Heart right ventricle (tissue), 16 donors: ENCODE measurements at regions of chr15 and their contacts with region 1.

Region 1: DNA sequence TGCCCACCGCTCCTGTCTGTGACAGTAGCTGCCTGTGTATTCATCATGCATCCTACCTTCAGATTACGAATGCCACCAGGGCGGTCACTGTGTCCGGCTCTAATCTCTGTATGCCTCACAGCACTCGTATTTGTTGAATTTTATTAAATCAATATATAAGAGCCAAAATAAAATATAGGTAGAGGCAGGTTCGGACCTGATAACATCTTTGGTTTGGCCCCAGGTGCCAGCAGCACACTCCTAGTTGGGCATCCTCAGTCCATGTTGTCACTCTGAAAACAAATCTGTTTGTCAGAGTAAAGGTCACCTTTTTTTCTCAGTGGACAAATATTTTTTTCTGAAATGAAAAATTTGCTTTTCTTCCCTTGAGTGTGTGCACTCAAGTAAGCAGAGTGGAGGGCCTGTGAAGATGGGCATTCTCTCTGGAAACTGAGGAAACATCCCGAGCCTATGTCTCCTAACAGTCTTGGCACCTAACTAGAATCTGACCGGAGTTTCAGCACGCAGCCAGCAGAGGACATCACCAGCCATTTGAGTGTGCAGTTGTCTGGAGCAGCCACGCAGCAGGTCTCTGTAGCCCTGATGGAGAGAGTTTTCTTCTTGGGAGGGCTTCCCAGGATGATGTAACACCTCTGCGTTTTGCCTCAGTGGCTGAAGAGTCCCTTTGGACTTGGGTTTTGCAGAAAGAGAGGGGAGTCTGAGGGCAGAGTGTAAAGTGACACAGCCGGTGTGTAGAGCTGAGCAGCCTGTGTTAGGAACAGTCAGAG is 51.3 kb downstream of the ABHD2 start:
- DNase-seq: no peak
- ATAC-seq: peak in 6 of 8 donors; percentile 13 to 36 (median 30)
- H3K4me3 ChIP-seq: no peak overlapping the region
- H3K27ac ChIP-seq: peak overlapping the region; percentile 15 to 88 (median 76)
- H3K4me1 ChIP-seq: peaks cover 30 to 100% (median 94%) of the 10 kb centered on the region in 9 donors
- H3K27me3 ChIP-seq: no peaks in the 10 kb centered on the region
- CTCF ChIP-seq: peak in 5 of 9 donors; percentile 15 to 42 (median 38)

Region 2: DNA sequence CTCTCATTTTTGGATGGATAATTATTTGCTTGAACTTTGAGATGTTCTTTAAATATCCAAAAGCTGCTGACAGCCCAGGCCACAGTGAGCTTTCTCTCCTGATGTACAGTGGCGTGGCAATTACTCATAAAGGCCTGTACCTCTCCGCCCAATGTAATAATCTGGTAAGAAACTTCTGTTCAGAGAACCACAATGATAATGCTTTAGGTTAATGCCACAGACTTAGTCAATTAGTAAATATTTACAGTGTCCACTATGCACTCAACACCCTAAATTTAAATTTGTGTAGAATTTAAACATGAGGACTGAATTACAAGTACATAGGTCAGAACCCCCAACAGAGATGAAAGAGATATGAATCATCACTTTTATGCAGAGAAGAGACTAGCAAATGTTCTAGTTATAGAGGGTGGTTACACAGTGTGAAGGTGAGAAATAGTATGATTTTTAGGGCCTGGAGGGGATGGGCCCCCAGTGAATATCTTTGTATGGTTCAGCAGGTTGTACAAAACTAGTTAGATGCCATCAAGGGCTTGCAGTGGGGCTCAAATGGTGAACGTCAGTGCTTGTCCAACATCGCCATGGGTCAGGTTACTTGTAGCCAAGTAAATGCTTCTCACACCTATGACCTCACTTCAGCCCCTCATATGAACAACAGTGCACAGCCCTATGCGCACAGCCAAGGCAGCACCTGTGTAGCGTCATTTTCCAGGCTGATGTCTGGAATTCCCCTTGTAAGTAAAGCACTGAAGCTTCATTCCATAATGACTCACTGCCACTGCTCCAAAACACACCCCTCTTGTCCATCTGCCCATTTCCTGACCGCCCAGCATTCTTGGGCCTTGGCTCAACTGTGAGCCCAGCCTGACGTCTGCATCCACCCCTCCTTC is 38.0 kb before region 1 on chr15:
- intact Hi-C with region 1: loop called in 1 of 10 experiments (anchors 5 kb)
- DNase-seq: peak; percentile 54 to 82
- ATAC-seq: peak; percentile 76 to 90 (median 84)
- H3K4me3 ChIP-seq: no peak overlapping the region
- H3K27ac ChIP-seq: peak overlapping the region in 9 of 10 donors; percentile 74 to 98 (median 84)
- H3K4me1 ChIP-seq: peaks cover 20 to 98% (median 89%) of the 10 kb centered on the region in 9 donors
- H3K27me3 ChIP-seq: no peaks in the 10 kb centered on the region
- CTCF ChIP-seq: no peak

Region 3: GRCh38 chr15:89171136-89172072 is 31.8 kb after region 1 on chr15:
- intact Hi-C with region 1: loop called in 3 of 10 experiments (anchors 5 kb)
- DNase-seq: peak in 1 of 2 donors; percentile 36
- ATAC-seq: peak in 2 of 8 donors; percentile 7 to 16
- H3K4me3 ChIP-seq: no peak overlapping the region
- H3K27ac ChIP-seq: no peak overlapping the region
- H3K4me1 ChIP-seq: peaks cover 0 to 61% (median 31%) of the 10 kb centered on the region in 9 donors
- H3K27me3 ChIP-seq: no peaks in the 10 kb centered on the region
- CTCF ChIP-seq: peak; percentile 39 to 76 (median 63)

Region 4: GRCh38 chr15:89177633-89178306 is 38.2 kb after region 1 on chr15:
- intact Hi-C with region 1: loop called in 3 of 10 experiments (anchors 5 kb)
- DNase-seq: peak; percentile 40 to 77
- ATAC-seq: peak in 7 of 8 donors; percentile 25 to 72 (median 54)
- H3K4me3 ChIP-seq: no peak overlapping the region
- H3K27ac ChIP-seq: peak overlapping the region in 7 of 10 donors; percentile 9 to 58 (median 39)
- H3K4me1 ChIP-seq: peaks cover 0 to 53% (median 21%) of the 10 kb centered on the region in 9 donors
- H3K27me3 ChIP-seq: no peaks in the 10 kb centered on the region
- CTCF ChIP-seq: peak; percentile 56 to 90 (median 86)